CD14-positive monocyte (primary cell): ENCODE measurements at regions of chr14 and their contacts with region 1.

Region 1: DNA sequence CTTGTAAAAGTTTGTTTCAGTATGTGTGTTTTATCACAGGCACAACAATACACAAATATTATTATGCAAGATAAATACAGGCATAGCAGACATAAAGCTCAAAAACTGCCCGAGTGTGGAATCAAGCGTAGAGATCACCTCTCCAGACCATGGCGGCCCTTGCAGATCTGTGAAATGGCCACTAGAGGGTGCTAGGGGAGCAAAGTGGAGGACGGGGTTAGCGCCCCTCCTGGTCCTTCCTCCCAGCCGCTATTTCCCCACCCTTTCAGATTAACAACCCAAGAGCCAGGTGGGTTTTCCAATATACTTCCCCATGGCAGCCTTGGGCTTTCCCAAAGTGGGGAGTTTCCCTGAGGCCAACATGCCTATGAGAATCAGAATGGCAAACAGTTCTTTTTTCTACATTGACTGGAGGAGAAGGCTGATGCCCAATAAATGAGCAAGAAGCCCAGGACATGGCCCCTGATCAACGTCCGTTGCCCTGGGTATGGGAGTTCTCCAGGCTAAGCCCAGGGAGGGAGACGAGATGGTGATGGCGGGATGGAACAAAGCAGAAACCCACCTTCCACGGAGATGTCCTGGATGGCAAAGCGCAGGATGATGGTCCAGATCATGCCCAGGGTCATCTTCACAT is 67.4 kb downstream of the ACTN1 start:
- DNase-seq: peak; percentile 76 to 87 (median 86)
- H3K4me3 ChIP-seq: no peak overlapping the region
- H3K4me3 Mint-ChIP-seq: no peak overlapping the region
- H3K27ac ChIP-seq: peak overlapping the region in 1 of 2 donors; percentile 6
- H3K27ac Mint-ChIP-seq: peak overlapping the region in 6 of 7 donors; percentile 27 to 74 (median 52)
- H3K4me1 ChIP-seq: peaks cover 13 to 15% of the 10 kb centered on the region in 2 donors
- H3K4me1 Mint-ChIP-seq: peaks cover 20% of the 10 kb centered on the region
- H3K27me3 ChIP-seq: no peaks in the 10 kb centered on the region
- H3K27me3 Mint-ChIP-seq: peaks cover 0 to under 1% (median 0%) of the 10 kb centered on the region in 3 donors
- CTCF ChIP-seq: peak; percentile 97

Region 2: DNA sequence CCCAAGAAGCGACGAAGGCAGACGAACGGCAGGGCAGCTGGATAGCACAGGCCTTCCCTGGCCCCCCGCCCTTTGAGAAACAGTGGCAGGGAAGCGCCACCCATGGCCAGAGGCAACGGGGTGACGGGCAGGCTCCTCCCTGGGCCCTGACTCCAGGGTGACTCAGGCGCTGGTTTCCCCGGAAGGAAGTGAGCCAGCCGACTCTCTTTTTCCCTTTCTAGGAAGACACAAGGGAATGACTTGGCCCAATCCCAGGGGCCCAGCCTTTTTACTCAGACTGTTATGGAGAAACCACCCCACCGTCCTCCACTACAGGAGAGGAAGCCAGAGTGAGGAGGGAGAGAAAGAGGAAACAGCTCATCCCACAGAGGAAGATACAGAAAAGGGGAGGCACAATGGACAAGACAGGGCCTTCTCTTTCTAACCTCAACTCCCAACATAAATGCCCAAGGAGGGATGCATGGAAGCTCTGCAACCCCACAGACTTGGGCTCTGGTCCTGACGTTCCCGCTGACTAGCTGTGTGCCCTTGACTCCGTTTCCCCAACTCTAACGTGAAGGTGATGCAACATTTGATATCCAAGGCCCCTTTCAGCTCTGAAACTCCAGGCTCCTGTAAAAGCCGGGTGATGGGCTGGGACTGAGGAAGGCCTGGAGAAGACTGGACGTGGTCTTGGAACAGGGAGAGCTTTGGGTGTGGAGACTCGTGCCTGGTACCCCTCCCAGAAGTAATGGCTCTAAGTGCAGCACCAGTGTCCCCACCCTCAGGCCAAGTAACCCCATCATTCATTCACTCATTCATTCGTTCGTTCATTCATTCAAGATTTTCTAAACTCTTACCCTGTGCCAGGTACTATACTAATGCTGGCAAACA is 39.6 kb after region 1 on chr14:
- intact Hi-C with region 1: loop called in 1 of 2 experiments (anchors 5 kb)
- DNase-seq: peak; percentile 93 to 98 (median 98)
- H3K4me3 ChIP-seq: peak overlapping the region in 1 of 3 experiments; percentile 41
- H3K4me3 Mint-ChIP-seq: peak overlapping the region; percentile 37 to 46
- H3K27ac ChIP-seq: peak overlapping the region; percentile 84 to 92
- H3K27ac Mint-ChIP-seq: peak overlapping the region; percentile 89 to 98 (median 95)
- H3K4me1 ChIP-seq: peaks cover 64 to 66% of the 10 kb centered on the region in 2 donors
- H3K4me1 Mint-ChIP-seq: peaks cover 78% of the 10 kb centered on the region
- H3K27me3 ChIP-seq: no peaks in the 10 kb centered on the region
- H3K27me3 Mint-ChIP-seq: no peaks in the 10 kb centered on the region
- CTCF ChIP-seq: no peak

Region 3: DNA sequence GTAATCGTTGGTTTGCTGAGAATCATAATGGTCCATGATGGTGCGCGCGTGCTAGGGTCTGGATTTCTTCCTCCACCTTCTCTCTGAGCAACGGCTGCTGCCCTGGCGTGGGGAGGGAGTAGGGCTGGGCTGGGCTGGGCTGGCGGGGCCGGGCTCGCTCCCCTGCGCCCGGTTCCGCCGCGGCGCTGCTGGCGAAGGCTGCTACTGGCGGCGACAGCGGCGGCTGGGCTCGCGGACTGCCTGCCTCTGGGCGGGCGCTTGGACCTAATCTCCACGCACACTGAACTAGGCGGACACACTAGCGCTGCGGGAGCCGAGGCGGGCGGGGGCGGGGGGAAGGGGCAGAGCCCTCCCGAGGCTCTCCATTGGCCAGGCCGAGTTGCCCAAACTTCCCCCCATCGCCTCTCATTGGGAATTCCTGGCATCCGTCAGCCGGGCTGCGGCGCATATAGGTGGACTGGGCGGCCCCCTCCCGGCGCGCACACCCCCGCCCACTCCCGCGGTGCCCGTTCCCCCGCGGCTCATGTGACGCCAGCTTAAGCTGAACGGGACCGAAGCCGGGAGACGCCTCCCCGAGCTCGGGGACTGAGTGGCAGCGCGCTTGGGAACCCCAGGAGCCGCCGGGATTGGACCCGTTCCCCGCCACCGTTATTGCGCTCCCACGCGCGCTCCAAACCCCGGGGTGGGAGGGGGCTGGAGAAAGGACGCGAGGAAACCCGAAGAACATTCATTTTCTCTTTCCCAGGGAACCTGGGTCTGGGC is 67.5 kb after region 1 on chr14 and contains the start of gene ACTN1:
- intact Hi-C with region 1: loop called (anchors 2 kb)
- DNase-seq: peak; percentile 89 to 93 (median 91)
- H3K4me3 ChIP-seq: peak within 1 kb of the TSS; percentile 72 to 96 (median 93)
- H3K4me3 Mint-ChIP-seq: peak within 1 kb of the TSS; percentile 93 to 96
- H3K27ac ChIP-seq: peak within 1 kb of the TSS; percentile 66 to 85
- H3K27ac Mint-ChIP-seq: peak within 1 kb of the TSS; percentile 60 to 92 (median 84)
- H3K4me1 ChIP-seq: peaks cover 22 to 34% of the 10 kb centered on the region in 2 donors
- H3K4me1 Mint-ChIP-seq: peaks cover 37% of the 10 kb centered on the region
- H3K27me3 ChIP-seq: no peaks in the 10 kb centered on the region
- H3K27me3 Mint-ChIP-seq: peaks cover 0 to 10% (median 7%) of the 10 kb centered on the region in 3 donors
- CTCF ChIP-seq: no peak
- polyA plus RNA-seq, gene ACTN1: 41.4 to 75.0 (median 69.4) TPM

Region 4: DNA sequence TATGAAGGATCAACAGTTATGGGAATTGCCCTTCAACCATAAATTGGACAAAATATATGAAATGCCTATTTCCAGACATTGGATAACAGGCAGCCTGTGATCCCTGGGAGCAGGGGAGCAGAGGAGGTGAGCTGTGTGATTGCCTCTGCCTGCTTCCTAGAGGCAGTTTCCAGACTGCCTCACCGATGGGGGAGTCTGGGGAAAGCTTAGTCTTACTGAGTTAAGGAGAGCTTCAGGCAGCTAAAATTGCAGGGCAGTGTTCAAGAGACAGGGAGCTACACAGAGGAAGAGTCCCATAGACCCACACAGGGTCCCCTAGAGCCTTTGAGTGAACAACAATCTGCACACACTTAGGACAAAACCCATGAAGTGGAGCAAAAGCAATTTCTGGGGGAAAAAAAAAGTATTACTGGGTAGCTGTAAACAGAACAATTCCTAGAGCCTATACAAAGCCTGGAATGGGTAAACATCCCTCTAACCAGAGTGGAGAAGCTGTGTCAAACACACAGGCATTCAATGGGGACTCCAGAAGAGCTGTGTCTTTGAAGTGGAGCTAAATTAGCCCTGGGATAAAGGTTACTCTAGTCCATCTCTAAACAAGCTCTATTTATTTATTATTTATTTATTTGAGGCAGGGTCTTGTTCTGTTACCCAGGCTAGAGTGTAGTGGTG is 115.7 kb after region 1 on chr14:
- intact Hi-C with region 1: no loop called
- DNase-seq: no peak
- H3K4me3 ChIP-seq: no peak overlapping the region
- H3K4me3 Mint-ChIP-seq: no peak overlapping the region
- H3K27ac ChIP-seq: no peak overlapping the region
- H3K27ac Mint-ChIP-seq: no peak overlapping the region
- H3K4me1 ChIP-seq: peaks cover 3 to 11% of the 10 kb centered on the region in 2 donors
- H3K4me1 Mint-ChIP-seq: peaks cover 11% of the 10 kb centered on the region
- H3K27me3 ChIP-seq: no peaks in the 10 kb centered on the region
- H3K27me3 Mint-ChIP-seq: peaks cover 0 to 2% (median 1%) of the 10 kb centered on the region in 3 donors
- CTCF ChIP-seq: no peak

Region 5: GRCh38 chr14:69090187-69090789 is 178.6 kb after region 1 on chr14:
- intact Hi-C with region 1: loop called in 1 of 2 experiments (anchors 5 kb)
- DNase-seq: peak; percentile 7 to 28 (median 21)
- H3K4me3 ChIP-seq: no peak overlapping the region
- H3K4me3 Mint-ChIP-seq: no peak overlapping the region
- H3K27ac ChIP-seq: no peak overlapping the region
- H3K27ac Mint-ChIP-seq: no peak overlapping the region
- H3K4me1 ChIP-seq: no peaks in the 10 kb centered on the region
- H3K4me1 Mint-ChIP-seq: peaks cover 5% of the 10 kb centered on the region
- H3K27me3 ChIP-seq: no peaks in the 10 kb centered on the region
- H3K27me3 Mint-ChIP-seq: peaks cover 0 to 1% (median 0%) of the 10 kb centered on the region in 3 donors
- CTCF ChIP-seq: peak; percentile 77

Region 6: DNA sequence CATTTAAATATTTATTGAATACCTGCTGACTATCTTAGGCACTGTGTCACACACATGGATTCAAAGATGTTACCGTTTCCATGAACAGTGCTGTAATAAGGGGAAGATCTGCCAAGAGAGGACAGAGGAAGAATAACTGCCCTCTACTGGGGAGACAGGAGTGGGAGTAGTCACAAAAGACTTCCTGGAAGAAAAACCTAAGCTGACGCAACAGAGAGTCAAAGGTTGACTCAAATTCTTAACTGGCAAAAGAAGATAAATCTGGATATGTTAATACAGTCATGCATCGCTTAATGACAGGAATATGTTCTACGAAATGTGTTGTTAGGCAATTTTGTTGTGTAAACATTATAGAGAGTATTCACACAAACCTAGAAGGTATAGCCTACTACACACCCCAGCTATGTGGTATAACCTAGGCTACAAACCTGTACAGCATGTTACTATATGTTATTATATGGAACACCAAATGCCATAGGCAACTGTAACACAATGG is 189.7 kb after region 1 on chr14:
- intact Hi-C with region 1: loop called (anchors 5 kb)
- DNase-seq: peak; percentile 53 to 73 (median 68)
- H3K4me3 ChIP-seq: no peak overlapping the region
- H3K4me3 Mint-ChIP-seq: no peak overlapping the region
- H3K27ac ChIP-seq: no peak overlapping the region
- H3K27ac Mint-ChIP-seq: no peak overlapping the region
- H3K4me1 ChIP-seq: peaks cover 0 to 7% of the 10 kb centered on the region in 2 donors
- H3K4me1 Mint-ChIP-seq: peaks cover 4% of the 10 kb centered on the region
- H3K27me3 ChIP-seq: no peaks in the 10 kb centered on the region
- H3K27me3 Mint-ChIP-seq: peaks cover 0 to 1% (median 0%) of the 10 kb centered on the region in 3 donors
- CTCF ChIP-seq: peak; percentile 65

Region 7: GRCh38 chr14:69107407-69108003 is 195.8 kb after region 1 on chr14:
- intact Hi-C with region 1: loop called (anchors 5 kb)
- DNase-seq: peak; percentile 21 to 48 (median 40)
- H3K4me3 ChIP-seq: no peak overlapping the region
- H3K4me3 Mint-ChIP-seq: no peak overlapping the region
- H3K27ac ChIP-seq: no peak overlapping the region
- H3K27ac Mint-ChIP-seq: peak overlapping the region in 1 of 7 donors; percentile 46
- H3K4me1 ChIP-seq: no peaks in the 10 kb centered on the region
- H3K4me1 Mint-ChIP-seq: peaks cover 5% of the 10 kb centered on the region
- H3K27me3 ChIP-seq: no peaks in the 10 kb centered on the region
- H3K27me3 Mint-ChIP-seq: no peaks in the 10 kb centered on the region
- CTCF ChIP-seq: peak; percentile 64